Transverse colon (tissue), 4 donors: ENCODE measurements at regions of chr11 and their contacts with region 1.

Region 1: GRCh38 chr11:447923-448731 is 2.0 kb upstream of the PTDSS2 start:
- DNase-seq: peak; percentile 97
- H3K4me3 ChIP-seq: peak overlapping the region; percentile 36 to 73 (median 57)
- H3K27ac ChIP-seq: peak overlapping the region; percentile 92 to 98 (median 95)
- H3K4me1 ChIP-seq: peaks cover 25 to 68% (median 54%) of the 10 kb centered on the region in 4 donors
- H3K27me3 ChIP-seq: no peaks in the 10 kb centered on the region
- CTCF ChIP-seq: peak; percentile 76 to 98 (median 86)
- EP300 ChIP-seq: peak; percentile 7
- POLR2A ChIP-seq: peak; percentile 76

Region 2: GRCh38 chr11:369336-370018 is 78.7 kb before region 1 on chr11 and contains the start of gene B4GALNT4:
- in situ Hi-C with region 1: no loop called
- intact Hi-C with region 1: loop called (anchors 10 kb)
- DNase-seq: no peak
- H3K4me3 ChIP-seq: peak within 1 kb of the TSS in 1 of 4 donors; percentile 42
- H3K27ac ChIP-seq: no peak within 1 kb of the TSS
- H3K4me1 ChIP-seq: peaks cover 0 to 10% (median 8%) of the 10 kb centered on the region in 4 donors
- H3K27me3 ChIP-seq: peaks cover 50% of the 10 kb centered on the region
- CTCF ChIP-seq: no peak
- EP300 ChIP-seq: no peak
- POLR2A ChIP-seq: no peak
- total RNA-seq, gene B4GALNT4: 0.82 to 3.0 (median 1.3) TPM in 3 of 4 donors, not detected in the other

Region 3: DNA sequence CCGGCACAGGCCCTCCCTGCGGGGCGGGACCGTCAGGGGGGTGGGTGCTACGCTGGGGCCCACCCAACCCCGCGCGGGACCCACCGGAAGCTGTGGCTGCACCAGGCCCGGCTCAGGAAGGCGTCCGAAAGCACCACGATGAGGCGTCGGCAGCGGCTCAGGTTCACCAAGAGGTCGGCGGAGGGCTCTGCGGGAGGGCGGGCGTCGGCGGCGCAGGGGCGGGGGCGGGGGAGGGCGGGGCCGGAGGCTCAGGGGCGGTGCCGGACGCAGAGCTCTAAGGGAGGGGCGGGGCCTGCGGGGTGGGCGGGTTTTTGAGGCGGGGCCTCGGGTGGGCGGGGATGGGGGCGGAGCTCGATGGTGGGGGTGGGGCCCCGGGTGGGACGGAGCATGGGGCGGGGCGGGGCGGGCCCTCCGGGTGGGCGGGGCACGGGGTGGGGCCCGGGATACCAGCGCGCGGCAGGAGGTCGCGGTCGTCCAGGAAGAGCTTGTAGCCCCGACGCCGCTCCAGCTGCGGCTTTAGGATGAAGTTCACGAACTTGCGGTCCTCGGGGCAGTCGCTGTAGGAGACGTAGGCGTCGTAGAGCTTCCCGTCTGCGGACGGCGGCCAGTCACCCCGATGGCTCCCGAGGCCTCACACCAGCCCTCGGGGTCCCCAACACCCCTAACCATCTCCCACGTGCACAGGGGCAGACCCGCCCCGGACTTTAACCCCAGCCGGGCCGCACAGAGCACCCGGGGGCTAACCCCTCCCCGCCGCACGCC is 41.0 kb before region 1 on chr11:
- in situ Hi-C with region 1: loop called in 1 of 4 experiments (anchors 10 kb)
- intact Hi-C with region 1: no loop called
- DNase-seq: peak; percentile 89
- H3K4me3 ChIP-seq: peak overlapping the region; percentile 45 to 55 (median 48)
- H3K27ac ChIP-seq: peak overlapping the region; percentile 78 to 88 (median 86)
- H3K4me1 ChIP-seq: peaks cover 8 to 22% (median 17%) of the 10 kb centered on the region in 4 donors
- H3K27me3 ChIP-seq: peaks cover 3% of the 10 kb centered on the region
- CTCF ChIP-seq: peak in 1 of 5 experiments; percentile 6
- EP300 ChIP-seq: no peak
- POLR2A ChIP-seq: no peak

Region 4: DNA sequence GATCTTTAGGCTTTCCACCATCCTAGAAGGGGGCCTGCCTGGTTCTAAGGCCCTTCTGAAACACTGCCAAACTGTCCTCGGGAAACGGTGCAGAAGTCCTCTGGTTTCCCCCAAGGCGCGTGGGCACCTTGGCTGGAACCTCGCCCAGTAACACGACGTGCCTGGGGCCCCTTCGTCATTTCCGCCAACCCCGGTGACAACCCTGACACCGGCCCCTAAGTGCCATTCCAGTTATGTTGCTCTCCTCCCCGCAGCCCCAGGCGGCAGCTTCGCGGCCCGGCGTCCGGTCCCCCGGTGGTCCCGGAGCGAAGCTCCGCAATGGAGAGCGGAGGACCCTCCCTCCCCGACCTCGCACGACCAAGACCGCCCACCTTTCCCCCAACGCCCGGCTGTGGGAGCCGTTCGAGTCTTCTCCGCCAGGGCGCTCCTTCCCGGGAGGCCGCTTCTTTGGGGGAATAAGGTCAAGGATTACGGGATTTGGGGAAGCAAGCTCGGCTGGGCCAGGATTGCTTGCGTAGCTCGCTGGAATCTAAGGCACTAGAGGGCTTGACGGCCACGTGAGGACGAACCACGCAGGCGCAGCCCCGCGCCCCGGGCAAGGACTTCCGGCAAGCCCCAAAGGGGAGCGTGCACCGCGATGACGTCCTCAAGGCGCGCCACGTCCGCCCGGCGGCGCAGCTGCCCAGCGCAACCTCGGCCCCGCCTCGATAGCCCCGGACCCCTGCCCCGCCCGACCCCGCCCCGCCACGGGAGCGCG is 58.3 kb after region 1 on chr11:
- in situ Hi-C with region 1: no loop called
- intact Hi-C with region 1: loop called (anchors 10 kb)
- DNase-seq: peak; percentile 98
- H3K4me3 ChIP-seq: peak overlapping the region; percentile 52 to 87 (median 86)
- H3K27ac ChIP-seq: peak overlapping the region; percentile 94 to 100 (median 99)
- H3K4me1 ChIP-seq: peaks cover 24 to 51% (median 42%) of the 10 kb centered on the region in 4 donors
- H3K27me3 ChIP-seq: no peaks in the 10 kb centered on the region
- CTCF ChIP-seq: peak in 2 of 5 experiments; percentile 24 to 30
- EP300 ChIP-seq: peak; percentile 64
- POLR2A ChIP-seq: peak; percentile 82